ENCODE measurements at regions of chr9 and their contacts with region 1.

Region 1: GRCh38 chr9:3441197-3441816 is 84.5 kb downstream of the RFX3 start:
- DNase-seq: peak; percentile 74
- ATAC-seq: peak; percentile 78
- H3K4me3 ChIP-seq: no peak overlapping the region
- H3K4me3 Mint-ChIP-seq: no peak overlapping the region
- H3K27ac ChIP-seq: no peak overlapping the region
- H3K27ac Mint-ChIP-seq: no peak overlapping the region
- H3K4me1 ChIP-seq: peaks cover 3% of the 10 kb centered on the region in 2 donors
- H3K4me1 Mint-ChIP-seq: peaks cover 7% of the 10 kb centered on the region
- H3K27me3 ChIP-seq: no peaks in the 10 kb centered on the region
- H3K27me3 Mint-ChIP-seq: no peaks in the 10 kb centered on the region
- CTCF ChIP-seq: peak; percentile 78

Region 2: GRCh38 chr9:2857564-2858198 is 583.6 kb before region 1 on chr9:
- CTCF ChIA-PET with region 1: interaction called, 4 read pairs
- POLR2A ChIA-PET with region 1: no interaction called
- intact Hi-C with region 1: loop called (anchors 1 kb)
- DNase-seq: peak; percentile 71
- ATAC-seq: peak; percentile 73
- H3K4me3 ChIP-seq: no peak overlapping the region
- H3K4me3 Mint-ChIP-seq: no peak overlapping the region
- H3K27ac ChIP-seq: no peak overlapping the region
- H3K27ac Mint-ChIP-seq: no peak overlapping the region
- H3K4me1 ChIP-seq: no peaks in the 10 kb centered on the region
- H3K4me1 Mint-ChIP-seq: peaks cover 6% of the 10 kb centered on the region
- H3K27me3 ChIP-seq: peaks cover 0 to 3% (median 0%) of the 10 kb centered on the region in 4 experiments
- H3K27me3 Mint-ChIP-seq: peaks cover 35% of the 10 kb centered on the region
- CTCF ChIP-seq: peak; percentile 93

Region 3: GRCh38 chr9:3331817-3332216 is 109.5 kb before region 1 on chr9:
- CTCF ChIA-PET with region 1: interaction called, 22 read pairs
- POLR2A ChIA-PET with region 1: no interaction called
- intact Hi-C with region 1: no loop called
- DNase-seq: peak; percentile 5
- ATAC-seq: no peak
- H3K4me3 ChIP-seq: no peak overlapping the region
- H3K4me3 Mint-ChIP-seq: no peak overlapping the region
- H3K27ac ChIP-seq: no peak overlapping the region
- H3K27ac Mint-ChIP-seq: no peak overlapping the region
- H3K4me1 ChIP-seq: no peaks in the 10 kb centered on the region
- H3K4me1 Mint-ChIP-seq: no peaks in the 10 kb centered on the region
- H3K27me3 ChIP-seq: no peaks in the 10 kb centered on the region
- H3K27me3 Mint-ChIP-seq: no peaks in the 10 kb centered on the region
- CTCF ChIP-seq: no peak

Region 4: DNA sequence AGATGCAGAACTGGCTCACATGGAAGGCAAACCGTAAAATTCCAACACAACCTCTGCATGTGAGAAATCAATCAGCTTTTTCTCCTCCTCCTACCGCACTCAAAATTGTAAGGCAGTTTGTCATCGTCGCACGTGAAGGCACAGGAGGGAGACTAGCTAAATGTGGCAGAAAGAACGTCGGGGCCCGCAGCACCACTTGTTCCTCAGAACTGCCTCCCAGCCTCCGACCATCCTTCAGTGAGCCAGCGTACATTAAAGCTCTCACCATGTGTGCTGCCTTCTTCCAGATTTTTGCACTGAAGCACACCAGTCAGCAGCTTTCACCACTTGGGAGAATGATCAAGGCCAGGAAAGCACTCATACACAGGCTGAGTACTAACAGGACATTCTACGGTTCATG is 21.4 kb before region 1 on chr9:
- CTCF ChIA-PET with region 1: interaction called, 11 read pairs
- POLR2A ChIA-PET with region 1: no interaction called
- intact Hi-C with region 1: no loop called
- DNase-seq: no peak
- ATAC-seq: no peak
- H3K4me3 ChIP-seq: no peak overlapping the region
- H3K4me3 Mint-ChIP-seq: no peak overlapping the region
- H3K27ac ChIP-seq: no peak overlapping the region
- H3K27ac Mint-ChIP-seq: no peak overlapping the region
- H3K4me1 ChIP-seq: no peaks in the 10 kb centered on the region
- H3K4me1 Mint-ChIP-seq: no peaks in the 10 kb centered on the region
- H3K27me3 ChIP-seq: no peaks in the 10 kb centered on the region
- H3K27me3 Mint-ChIP-seq: no peaks in the 10 kb centered on the region
- CTCF ChIP-seq: no peak

Region 5: GRCh38 chr9:3467593-3468219 is 26.4 kb after region 1 on chr9:
- CTCF ChIA-PET with region 1: interaction called, 12 read pairs
- POLR2A ChIA-PET with region 1: no interaction called
- intact Hi-C with region 1: no loop called
- DNase-seq: peak; percentile 70
- ATAC-seq: peak; percentile 91
- H3K4me3 ChIP-seq: no peak overlapping the region
- H3K4me3 Mint-ChIP-seq: no peak overlapping the region
- H3K27ac ChIP-seq: no peak overlapping the region
- H3K27ac Mint-ChIP-seq: peak overlapping the region; percentile 76
- H3K4me1 ChIP-seq: peaks cover 4 to 6% of the 10 kb centered on the region in 2 donors
- H3K4me1 Mint-ChIP-seq: peaks cover 11% of the 10 kb centered on the region
- H3K27me3 ChIP-seq: no peaks in the 10 kb centered on the region
- H3K27me3 Mint-ChIP-seq: no peaks in the 10 kb centered on the region
- CTCF ChIP-seq: peak; percentile 90